ENCODE measurements at regions of chr15 and their contacts with region 1.

Region 1: DNA sequence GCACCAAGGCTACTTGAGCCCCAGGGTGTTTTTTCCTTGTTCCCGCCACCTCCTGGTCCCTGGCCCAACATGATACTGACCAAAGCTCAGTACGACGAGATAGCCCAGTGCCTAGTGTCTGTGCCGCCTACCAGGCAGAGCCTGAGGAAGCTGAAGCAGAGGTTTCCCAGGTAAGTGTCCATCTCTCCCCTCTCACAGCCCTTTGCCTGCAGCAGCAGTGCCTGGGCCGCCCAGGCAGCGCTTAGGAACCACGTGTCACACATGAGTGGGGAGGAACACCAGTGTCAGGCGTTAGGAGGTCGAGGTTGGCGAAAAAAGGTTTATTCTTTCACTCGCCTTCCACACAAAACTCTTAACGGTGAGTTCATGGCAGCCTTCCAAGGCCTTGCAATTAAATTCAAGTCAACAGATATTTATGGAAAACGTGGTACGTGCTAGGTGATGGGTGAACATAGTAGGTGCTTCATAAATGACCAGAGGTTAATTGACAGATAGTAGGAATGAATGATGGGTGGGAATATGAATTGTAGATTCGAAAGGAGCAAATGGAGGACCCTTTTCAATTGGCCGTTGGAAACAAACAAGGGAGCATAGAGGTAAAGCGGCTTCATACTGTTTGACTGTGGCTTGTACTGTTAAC is 486 bp downstream of the CDIN1 start:
- DNase-seq: peak; percentile 42
- H3K4me3 ChIP-seq: peak overlapping the region; percentile 74
- H3K27ac ChIP-seq: peak overlapping the region; percentile 21
- H3K4me1 ChIP-seq: peaks cover 18% of the 10 kb centered on the region
- CTCF ChIP-seq: no peak

Region 2: GRCh38 chr15:35545824-35546510 is 1033.9 kb before region 1 on chr15 and contains the start of gene DPH6:
- CTCF ChIA-PET with region 1: no interaction called
- POLR2A ChIA-PET with region 1: no interaction called
- intact Hi-C with region 1: loop called (anchors 10 kb)
- DNase-seq: peak; percentile 86
- H3K4me3 ChIP-seq: peak within 1 kb of the TSS; percentile 85
- H3K27ac ChIP-seq: peak within 1 kb of the TSS; percentile 81
- H3K4me1 ChIP-seq: peaks cover 15% of the 10 kb centered on the region
- CTCF ChIP-seq: no peak
- total RNA-seq, gene DPH6: 12.6 and 26.4 TPM in 2 replicates

Region 3: GRCh38 chr15:36313021-36313420 is 266.9 kb before region 1 on chr15:
- CTCF ChIA-PET with region 1: no interaction called
- POLR2A ChIA-PET with region 1: no interaction called
- intact Hi-C with region 1: no loop called
- DNase-seq: no peak
- H3K4me3 ChIP-seq: no peak overlapping the region
- H3K27ac ChIP-seq: no peak overlapping the region
- H3K4me1 ChIP-seq: no peaks in the 10 kb centered on the region
- CTCF ChIP-seq: no peak